ENCODE measurements at regions of chr7 and their contacts with region 1.

Region 1: GRCh38 chr7:44587843-44588711 is 6.0 kb upstream of the TMED4 start:
- DNase-seq: peak; percentile 81
- H3K4me3 ChIP-seq: no peak overlapping the region
- H3K27ac ChIP-seq: no peak overlapping the region
- H3K4me1 ChIP-seq: no peaks in the 10 kb centered on the region
- H3K27me3 ChIP-seq: no peaks in the 10 kb centered on the region
- CTCF ChIP-seq: peak; percentile 27 to 48
- POLR2A ChIP-seq: no peak

Region 2: DNA sequence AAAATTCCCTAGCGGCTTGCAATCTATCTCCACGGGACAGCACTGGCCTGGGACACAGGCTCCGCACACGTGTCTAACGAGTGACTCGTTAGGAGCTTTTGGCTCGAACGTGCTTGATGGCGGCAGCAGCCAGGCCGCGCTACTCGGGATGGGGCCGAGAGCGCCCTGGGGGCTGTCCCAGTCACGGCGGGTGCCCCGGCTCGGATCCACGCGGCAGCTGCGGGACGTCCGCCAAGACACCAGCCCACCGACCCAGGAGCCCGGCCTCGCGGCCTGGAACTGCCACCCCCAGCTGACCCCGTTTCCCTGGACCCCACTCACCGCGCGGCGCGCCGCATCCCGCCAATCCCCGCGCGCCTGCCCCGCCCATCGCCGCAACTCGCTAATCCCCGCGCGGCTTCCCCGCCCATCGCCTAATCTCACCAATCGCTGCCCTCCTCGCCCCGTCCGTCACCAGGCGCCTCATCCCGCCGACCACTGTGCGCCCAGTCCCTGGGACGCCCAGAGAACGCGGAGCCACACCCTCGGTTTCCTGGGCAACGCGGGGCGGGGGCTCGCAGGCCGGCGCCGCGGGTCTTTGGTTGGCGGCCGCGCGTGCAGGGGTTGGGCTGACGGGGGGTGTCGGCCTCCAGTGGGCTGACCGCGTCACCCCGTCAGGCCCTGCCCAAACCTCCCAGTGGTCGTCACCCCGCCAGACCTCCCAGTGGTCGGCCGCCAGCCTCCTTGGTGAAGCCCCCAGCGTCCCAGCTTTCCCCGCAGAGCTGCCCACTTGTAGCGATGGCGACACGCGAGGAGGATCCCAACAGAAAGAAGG is 464.7 kb before region 1 on chr7 and contains the start of gene POLD2:
- CTCF ChIA-PET with region 1: no interaction called
- POLR2A ChIA-PET with region 1: no interaction called
- dilution Hi-C with region 1: no loop called
- intact Hi-C with region 1: no loop called
- DNase-seq: peak; percentile 98
- H3K4me3 ChIP-seq: peak within 1 kb of the TSS; percentile 69 to 84 (median 79)
- H3K27ac ChIP-seq: peak within 1 kb of the TSS; percentile 53
- H3K4me1 ChIP-seq: peaks cover 14% of the 10 kb centered on the region
- H3K27me3 ChIP-seq: peaks cover 0 to under 1% of the 10 kb centered on the region in 2 experiments
- CTCF ChIP-seq: no peak
- POLR2A ChIP-seq: peak; percentile 40
- total RNA-seq, gene POLD2: 96.5 and 106 TPM in 2 replicates

Region 3: GRCh38 chr7:44547536-44548231 is 40.4 kb before region 1 on chr7:
- CTCF ChIA-PET with region 1: no interaction called
- POLR2A ChIA-PET with region 1: no interaction called
- dilution Hi-C with region 1: no loop called
- intact Hi-C with region 1: no loop called
- DNase-seq: peak; percentile 42
- H3K4me3 ChIP-seq: no peak overlapping the region
- H3K27ac ChIP-seq: no peak overlapping the region
- H3K4me1 ChIP-seq: peaks cover 2% of the 10 kb centered on the region
- H3K27me3 ChIP-seq: peaks cover 8 to 12% of the 10 kb centered on the region in 2 experiments
- CTCF ChIP-seq: no peak
- POLR2A ChIP-seq: no peak

Region 4: DNA sequence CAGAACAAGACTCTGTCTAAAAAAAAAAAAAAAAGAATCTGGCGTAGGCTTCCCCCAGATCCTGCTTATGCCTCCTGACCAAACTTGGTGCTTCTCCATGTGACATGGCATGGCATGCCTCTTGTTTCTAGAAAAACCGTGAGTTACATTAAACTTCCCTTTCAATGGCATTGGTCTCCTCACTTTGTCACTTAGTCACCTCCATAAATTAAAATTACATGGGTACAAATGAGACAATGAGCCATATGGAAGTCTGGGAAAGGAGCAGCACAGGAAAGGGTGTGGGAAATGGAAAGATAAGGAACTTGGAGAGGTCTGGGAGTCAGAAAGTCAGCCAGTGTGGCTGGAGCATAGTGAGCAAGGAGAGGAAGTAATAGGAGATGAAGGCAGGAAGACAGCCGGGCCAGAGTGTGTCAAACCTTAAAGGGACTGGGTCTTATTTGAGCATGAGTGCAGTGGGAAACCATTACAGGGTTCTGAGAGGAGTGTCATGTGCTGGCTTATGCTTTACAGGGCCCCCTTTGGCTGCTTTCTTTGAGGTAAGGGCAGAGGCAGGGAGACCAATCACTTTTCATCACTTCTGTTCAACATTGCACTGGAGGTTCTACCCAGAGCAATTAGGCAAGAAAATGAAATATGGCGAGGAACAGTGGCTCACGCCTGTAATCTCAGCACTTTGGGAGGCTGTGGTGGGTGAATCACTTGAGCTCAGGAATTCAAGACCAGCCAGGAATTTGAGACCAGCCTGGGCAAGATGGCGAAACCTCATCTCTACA is 139.3 kb after region 1 on chr7:
- CTCF ChIA-PET with region 1: no interaction called
- POLR2A ChIA-PET with region 1: no interaction called
- dilution Hi-C with region 1: no loop called
- intact Hi-C with region 1: no loop called
- DNase-seq: peak; percentile 80
- H3K4me3 ChIP-seq: no peak overlapping the region
- H3K27ac ChIP-seq: peak overlapping the region; percentile 67
- H3K4me1 ChIP-seq: peaks cover 16% of the 10 kb centered on the region
- H3K27me3 ChIP-seq: no peaks in the 10 kb centered on the region
- CTCF ChIP-seq: no peak
- POLR2A ChIP-seq: peak; percentile 48

Region 5: GRCh38 chr7:44738051-44738723 is 150.1 kb after region 1 on chr7:
- CTCF ChIA-PET with region 1: no interaction called
- POLR2A ChIA-PET with region 1: no interaction called
- dilution Hi-C with region 1: no loop called
- intact Hi-C with region 1: no loop called
- DNase-seq: no peak
- H3K4me3 ChIP-seq: no peak overlapping the region
- H3K27ac ChIP-seq: no peak overlapping the region
- H3K4me1 ChIP-seq: peaks cover 23% of the 10 kb centered on the region
- H3K27me3 ChIP-seq: no peaks in the 10 kb centered on the region
- CTCF ChIP-seq: no peak
- POLR2A ChIP-seq: no peak

Region 6: DNA sequence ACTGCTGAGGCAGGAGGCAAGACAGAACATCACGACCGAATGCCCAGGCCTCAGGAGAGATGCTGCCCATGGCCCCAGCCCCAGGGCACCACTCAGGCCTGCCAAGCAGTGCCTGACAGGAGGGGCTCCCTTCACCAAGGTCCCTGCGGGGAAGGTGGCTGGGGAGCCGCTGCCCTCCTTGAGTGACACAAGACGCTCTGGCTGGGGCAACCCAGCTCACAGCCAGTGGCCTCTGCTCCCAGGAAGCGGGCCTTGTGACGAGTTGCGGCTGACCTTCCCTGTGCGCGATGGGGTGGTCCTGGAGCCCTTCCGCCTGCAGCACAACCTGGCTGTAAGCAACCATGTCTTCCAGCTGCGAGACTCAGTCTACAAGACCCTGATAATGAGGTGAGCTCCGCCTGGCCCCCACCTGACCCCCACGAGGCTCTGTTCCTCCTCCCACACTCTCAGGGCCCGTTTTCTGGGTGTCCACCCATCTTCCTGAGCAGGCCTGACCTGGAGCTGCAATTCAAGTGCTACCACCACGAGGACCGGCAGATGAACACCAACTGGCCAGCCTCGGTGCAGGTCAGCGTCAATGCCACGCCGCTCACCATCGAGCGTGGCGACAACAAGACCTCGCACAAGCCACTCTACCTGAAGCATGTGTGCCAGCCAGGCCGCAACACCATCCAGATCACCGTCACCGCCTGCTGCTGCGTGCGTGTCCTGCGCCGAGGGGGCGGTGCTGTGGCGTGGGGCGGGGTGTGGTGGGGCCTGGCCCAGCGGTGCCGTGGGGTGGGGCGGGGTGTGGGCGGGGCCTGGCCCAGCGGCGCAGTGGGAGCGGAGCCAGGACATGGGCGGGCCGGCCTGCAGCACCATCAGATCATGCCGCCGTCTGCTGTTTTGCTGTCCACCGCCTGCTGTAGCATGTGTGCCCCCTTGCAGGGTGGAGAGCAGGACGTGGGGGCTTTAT is 173.4 kb after region 1 on chr7:
- CTCF ChIA-PET with region 1: no interaction called
- POLR2A ChIA-PET with region 1: no interaction called
- dilution Hi-C with region 1: no loop called
- intact Hi-C with region 1: loop called (anchors 1 kb)
- DNase-seq: no peak
- H3K4me3 ChIP-seq: no peak overlapping the region
- H3K27ac ChIP-seq: no peak overlapping the region
- H3K4me1 ChIP-seq: no peaks in the 10 kb centered on the region
- H3K27me3 ChIP-seq: no peaks in the 10 kb centered on the region
- CTCF ChIP-seq: no peak
- POLR2A ChIP-seq: no peak

Region 7: DNA sequence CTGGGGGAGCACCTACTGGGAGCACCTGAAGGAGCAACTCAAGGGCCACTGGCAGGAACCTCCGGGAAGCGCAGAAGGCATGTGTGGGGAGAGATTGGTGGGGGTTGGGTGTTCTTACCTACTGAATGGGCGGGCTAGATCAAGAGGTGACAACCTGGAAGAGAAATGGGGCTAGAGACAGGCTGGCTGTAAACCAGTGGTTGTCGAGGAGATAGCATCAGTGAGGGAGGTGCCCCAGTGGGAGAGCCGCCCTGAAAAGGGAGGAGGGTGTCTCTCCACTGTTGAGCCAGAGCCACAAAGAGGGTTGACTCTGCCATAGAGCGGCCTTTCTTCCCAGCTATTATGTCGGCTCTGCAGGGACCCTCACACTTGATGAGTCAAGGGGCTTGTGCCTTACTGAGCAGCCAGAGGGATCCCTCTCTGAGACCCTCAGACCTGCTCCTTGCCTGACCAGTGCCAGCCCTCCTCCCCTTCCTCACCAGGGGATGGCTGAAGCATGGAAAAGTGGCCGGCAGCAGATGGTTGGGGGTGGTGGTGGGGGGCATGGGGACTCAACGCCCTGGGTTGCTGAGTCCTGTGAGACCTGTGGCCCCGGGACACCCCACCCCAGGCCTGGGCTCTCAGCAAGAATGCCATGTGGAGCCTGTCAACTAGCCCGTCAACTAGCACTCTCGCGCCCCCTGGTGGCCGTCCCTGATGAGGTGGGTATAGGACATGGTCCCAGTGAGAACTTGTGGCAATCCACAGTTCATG is 333.7 kb after region 1 on chr7:
- CTCF ChIA-PET with region 1: no interaction called
- POLR2A ChIA-PET with region 1: no interaction called
- dilution Hi-C with region 1: no loop called
- intact Hi-C with region 1: loop called (anchors 1 kb)
- DNase-seq: peak; percentile 69
- H3K4me3 ChIP-seq: no peak overlapping the region
- H3K27ac ChIP-seq: no peak overlapping the region
- H3K4me1 ChIP-seq: no peaks in the 10 kb centered on the region
- H3K27me3 ChIP-seq: peaks cover 0 to 3% of the 10 kb centered on the region in 2 experiments
- CTCF ChIP-seq: peak; percentile 75 to 91
- POLR2A ChIP-seq: no peak

Measured in endothelial cell of umbilical vein (primary cell).